Posterior vena cava (tissue), 2 donors: ENCODE measurements at regions of chr4 and their contacts with region 1.

Region 1: GRCh38 chr4:39977489-39978377 is at the start of gene PDS5A:
- DNase-seq: peak; percentile 96
- total RNA-seq, gene PDS5A: 52.3 to 56.6 TPM

Region 2: DNA sequence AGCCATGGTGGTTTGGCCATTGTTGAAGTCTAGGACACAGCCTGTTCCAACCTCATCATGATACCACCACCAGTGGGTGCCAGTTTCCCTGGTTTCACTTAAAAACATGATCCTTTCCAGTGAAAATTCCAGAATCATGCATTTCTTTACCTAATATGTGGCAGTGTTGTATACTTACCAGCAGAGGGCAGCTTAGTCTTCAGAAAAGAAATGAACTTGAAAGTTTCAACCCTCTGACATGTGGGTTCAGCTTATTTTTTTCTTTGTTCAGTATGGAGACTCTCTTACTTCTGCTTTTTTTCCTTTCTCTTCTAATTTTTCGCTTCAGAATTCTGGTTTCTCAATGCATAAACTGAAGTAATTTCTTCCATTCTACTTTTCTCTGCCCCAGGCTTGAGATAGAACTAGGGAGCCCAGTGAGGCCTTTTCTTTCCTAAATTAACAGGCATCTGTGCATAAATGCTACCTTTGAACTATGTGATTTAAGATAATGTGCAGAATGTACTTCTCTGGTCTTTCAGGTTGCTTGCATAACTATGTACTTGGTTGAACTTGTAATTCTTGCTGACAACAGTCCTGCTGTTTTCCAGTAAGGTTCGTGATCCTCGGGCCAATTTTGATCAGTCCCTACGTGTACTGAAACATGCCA is 508.2 kb before region 1 on chr4:
- intact Hi-C with region 1: loop called in 1 of 2 experiments (anchors 10 kb)
- DNase-seq: no peak

Region 3: GRCh38 chr4:39697740-39698423 is 279.9 kb before region 1 on chr4 and contains the start of gene UBE2K:
- intact Hi-C with region 1: loop called (anchors 2 to 5 kb)
- DNase-seq: peak; percentile 96
- total RNA-seq, gene UBE2K: 52.4 to 71.9 TPM

Region 4: DNA sequence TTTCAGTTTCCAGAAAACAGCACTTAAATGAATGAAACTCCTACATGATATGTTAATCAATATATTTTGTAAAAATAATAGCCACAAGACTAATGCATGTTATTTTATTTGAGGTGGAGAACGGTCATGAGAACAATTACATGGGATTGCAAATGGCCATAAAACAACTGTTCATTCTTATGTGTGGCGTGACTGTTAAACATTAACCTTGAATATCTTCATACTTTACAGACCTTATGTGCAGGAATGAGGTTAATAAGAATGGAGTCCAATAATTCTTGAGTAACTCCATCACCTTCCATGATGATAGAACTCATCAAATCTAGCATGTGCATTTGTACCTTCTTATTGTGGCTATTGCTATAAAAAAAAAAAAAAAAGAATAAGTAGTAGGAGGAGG is 55.3 kb before region 1 on chr4:
- intact Hi-C with region 1: no loop called
- DNase-seq: no peak